Astrocyte of the cerebellum (primary cell): ENCODE measurements at regions of chr3 and their contacts with region 1.

Region 1: GRCh38 chr3:144763878-144764454 is 792.3 kb downstream of the DIPK2A start:
- DNase-seq: no peak
- H3K4me3 ChIP-seq: no peak overlapping the region
- CTCF ChIP-seq: no peak

Region 2: DNA sequence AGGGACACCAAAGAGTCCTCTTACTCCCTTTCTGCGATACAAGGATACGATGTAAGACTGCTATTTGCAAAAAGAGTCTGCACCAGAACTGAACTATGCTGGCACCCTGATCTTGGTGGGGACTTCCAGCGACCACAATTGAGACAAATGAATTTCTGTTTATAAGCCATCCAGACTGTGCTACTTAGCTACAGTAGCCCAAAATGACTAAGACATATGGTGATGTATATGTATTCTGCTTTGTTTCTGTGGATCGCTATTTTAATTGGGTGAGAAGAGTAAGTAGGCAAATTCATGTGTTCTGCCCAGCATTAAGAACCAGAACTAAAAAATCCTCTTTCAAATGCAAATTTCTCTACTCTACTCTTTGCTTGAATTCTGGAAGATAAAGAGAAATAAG is 71.5 kb before region 1 on chr3:
- in situ Hi-C with region 1: loop called (anchors 5 kb)
- DNase-seq: no peak
- H3K4me3 ChIP-seq: no peak overlapping the region
- CTCF ChIP-seq: no peak